Activated naive CD4-positive, alpha-beta T cell treated with anti-CD3 and anti-CD28 coated beads for 36 hours (primary cell): ENCODE measurements at regions of chr5 and their contacts with region 1.

Region 1: GRCh38 chr5:136080483-136081216 is 51.9 kb downstream of the TGFBI start:
- DNase-seq: peak; percentile 62
- H3K4me3 Mint-ChIP-seq: peak overlapping the region; percentile 12
- H3K27ac Mint-ChIP-seq: no peak overlapping the region
- H3K4me1 Mint-ChIP-seq: peaks cover 2% of the 10 kb centered on the region
- H3K27me3 Mint-ChIP-seq: peaks cover 23% of the 10 kb centered on the region

Region 2: GRCh38 chr5:136174021-136174659 is 93.5 kb after region 1 on chr5:
- CTCF ChIA-PET with region 1: interaction called, 4 read pairs
- intact Hi-C with region 1: loop called (anchors 1 kb)
- DNase-seq: no peak
- H3K4me3 Mint-ChIP-seq: no peak overlapping the region
- H3K27ac Mint-ChIP-seq: no peak overlapping the region
- H3K4me1 Mint-ChIP-seq: no peaks in the 10 kb centered on the region
- H3K27me3 Mint-ChIP-seq: peaks cover 4% of the 10 kb centered on the region

Region 3: DNA sequence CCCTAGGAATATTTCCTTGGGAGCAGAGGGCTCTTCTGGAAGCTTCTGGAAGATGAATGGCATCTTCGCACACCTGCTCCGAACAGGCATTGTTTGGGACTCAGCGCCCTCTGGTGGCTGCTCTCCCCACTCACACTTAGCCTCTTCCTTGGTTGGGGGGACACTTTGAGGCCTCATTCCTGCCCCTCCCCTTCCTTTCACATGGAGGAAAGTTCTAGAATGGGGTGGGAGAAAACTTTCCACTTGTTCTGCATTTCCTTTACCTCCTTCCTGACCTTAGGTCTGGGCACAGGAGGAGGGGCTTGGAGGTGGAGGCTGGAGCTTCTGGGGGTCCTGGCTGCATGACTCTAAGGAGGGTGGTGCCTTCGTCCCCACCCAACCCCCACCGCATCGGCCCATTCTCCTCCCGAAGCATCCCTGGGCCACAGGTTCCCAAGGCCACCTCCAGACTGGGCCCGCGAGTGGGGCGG is 131.6 kb after region 1 on chr5:
- CTCF ChIA-PET with region 1: no interaction called
- intact Hi-C with region 1: loop called (anchors 5 kb)
- DNase-seq: peak; percentile 55
- H3K4me3 Mint-ChIP-seq: no peak overlapping the region
- H3K27ac Mint-ChIP-seq: no peak overlapping the region
- H3K4me1 Mint-ChIP-seq: no peaks in the 10 kb centered on the region
- H3K27me3 Mint-ChIP-seq: peaks cover 8% of the 10 kb centered on the region